Mammary epithelial cell (primary cell): ENCODE measurements at regions of chr1 and their contacts with region 1.

Region 1: DNA sequence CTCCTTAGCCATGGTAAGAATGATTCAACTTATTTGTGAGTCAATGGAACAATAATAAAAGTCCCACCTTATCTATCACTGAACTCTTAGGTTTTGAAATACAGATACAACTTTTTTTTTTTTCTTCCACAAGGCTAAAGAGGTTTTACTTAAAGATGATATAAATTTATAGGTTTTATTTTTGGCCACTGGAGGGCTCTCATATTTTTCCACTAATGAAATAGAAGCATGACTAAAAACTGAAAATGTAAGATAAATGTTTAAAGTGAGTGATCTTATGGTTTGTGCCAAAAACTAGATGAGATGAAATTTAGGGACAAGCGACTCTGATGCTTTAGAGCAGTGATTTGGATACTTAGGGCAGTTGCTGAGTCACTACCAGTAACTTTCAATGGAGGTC is 499.0 kb downstream of the NUF2 start:
- DNase-seq: no peak
- H3K4me3 ChIP-seq: no peak overlapping the region
- H3K27ac ChIP-seq: no peak overlapping the region
- H3K4me1 ChIP-seq: peaks cover 11% of the 10 kb centered on the region
- H3K27me3 ChIP-seq: no peaks in the 10 kb centered on the region
- CTCF ChIP-seq: peak; percentile 3 to 22

Region 2: GRCh38 chr1:163744301-163744887 is 76.4 kb before region 1 on chr1:
- CTCF ChIA-PET with region 1: no interaction called
- dilution Hi-C with region 1: no loop called
- in situ Hi-C with region 1: no loop called
- intact Hi-C with region 1: no loop called
- DNase-seq: no peak
- H3K4me3 ChIP-seq: no peak overlapping the region
- H3K27ac ChIP-seq: no peak overlapping the region
- H3K4me1 ChIP-seq: no peaks in the 10 kb centered on the region
- H3K27me3 ChIP-seq: no peaks in the 10 kb centered on the region
- CTCF ChIP-seq: no peak

Region 3: DNA sequence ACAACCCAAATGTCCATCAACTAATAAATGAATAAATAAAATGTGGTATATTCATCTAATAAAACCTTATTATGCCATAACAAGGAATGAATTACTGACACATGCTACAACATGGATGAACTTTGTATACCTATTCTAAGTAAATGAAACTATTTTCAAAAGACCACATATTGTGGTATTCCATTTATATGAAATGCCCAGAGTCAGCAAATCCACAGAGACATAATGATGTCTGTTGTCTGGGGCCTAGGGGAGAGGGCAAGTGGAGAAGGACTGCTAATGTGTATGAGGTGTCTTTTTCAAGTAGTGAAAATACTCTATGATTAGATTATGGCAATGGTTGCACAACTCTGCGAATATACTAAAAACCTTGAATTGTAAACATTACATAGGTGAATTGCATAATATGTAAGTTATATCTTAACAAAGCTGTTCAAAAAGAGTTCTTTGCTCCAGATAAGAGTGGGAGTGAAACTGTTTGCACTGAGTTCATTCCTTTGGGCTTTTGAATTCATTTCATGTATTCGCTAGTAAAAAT is 34.8 kb before region 1 on chr1:
- CTCF ChIA-PET with region 1: no interaction called
- dilution Hi-C with region 1: no loop called
- in situ Hi-C with region 1: no loop called
- intact Hi-C with region 1: no loop called
- DNase-seq: no peak
- H3K4me3 ChIP-seq: no peak overlapping the region
- H3K27ac ChIP-seq: no peak overlapping the region
- H3K4me1 ChIP-seq: no peaks in the 10 kb centered on the region
- H3K27me3 ChIP-seq: no peaks in the 10 kb centered on the region
- CTCF ChIP-seq: no peak

Region 4: GRCh38 chr1:164611754-164612642 is 791.2 kb after region 1 on chr1:
- CTCF ChIA-PET with region 1: no interaction called
- dilution Hi-C with region 1: no loop called
- in situ Hi-C with region 1: no loop called
- intact Hi-C with region 1: loop called (anchors 2 kb)
- DNase-seq: peak; percentile 92
- H3K4me3 ChIP-seq: no peak overlapping the region
- H3K27ac ChIP-seq: peak overlapping the region; percentile 45
- H3K4me1 ChIP-seq: peaks cover 31% of the 10 kb centered on the region
- H3K27me3 ChIP-seq: no peaks in the 10 kb centered on the region
- CTCF ChIP-seq: no peak